HEK293 (cell line): ENCODE measurements at regions of chr22 and their contacts with region 1.

Region 1: DNA sequence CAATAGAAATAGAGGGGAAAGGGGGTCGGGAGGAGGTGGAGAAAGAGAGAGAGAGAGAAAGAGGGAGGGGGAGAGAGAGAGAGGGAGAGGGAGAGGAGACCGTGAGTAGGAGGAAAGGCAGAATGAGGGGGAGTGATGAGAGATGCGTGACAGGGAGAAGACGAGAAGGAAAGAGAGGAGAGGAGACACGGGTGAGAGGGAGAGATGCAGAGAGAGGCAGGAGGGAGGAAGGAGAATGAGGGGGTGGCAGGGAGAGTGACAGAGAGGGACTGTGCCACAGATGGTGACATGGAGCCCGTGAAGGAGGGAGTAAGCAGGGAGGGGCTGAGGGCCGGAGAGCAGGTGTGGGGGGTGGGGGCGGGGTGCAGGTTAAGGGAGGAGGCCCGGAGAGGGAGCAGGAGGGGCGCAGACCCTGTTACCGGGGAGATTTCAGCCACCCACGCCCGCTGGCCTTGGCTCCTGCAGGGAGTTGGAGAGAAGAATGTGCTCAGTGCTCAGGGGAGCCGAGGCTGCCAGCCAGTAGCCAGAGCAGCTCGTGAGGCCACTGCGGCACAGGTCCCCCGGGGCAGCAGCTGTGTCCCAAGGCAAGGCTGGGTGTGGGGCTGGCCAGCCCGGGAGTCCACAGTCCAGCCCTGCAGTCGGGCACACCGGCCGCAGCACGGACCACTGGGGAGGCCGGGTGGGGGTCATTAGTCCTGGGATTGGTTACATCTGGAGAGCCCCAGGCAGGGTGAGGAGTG is at the start of gene SSTR3:
- H3K4me3 ChIP-seq: no peak within 1 kb of the TSS
- H3K27ac ChIP-seq: no peak within 1 kb of the TSS
- H3K4me1 ChIP-seq: no peaks in the 10 kb centered on the region
- CTCF ChIP-seq: no peak

Region 2: DNA sequence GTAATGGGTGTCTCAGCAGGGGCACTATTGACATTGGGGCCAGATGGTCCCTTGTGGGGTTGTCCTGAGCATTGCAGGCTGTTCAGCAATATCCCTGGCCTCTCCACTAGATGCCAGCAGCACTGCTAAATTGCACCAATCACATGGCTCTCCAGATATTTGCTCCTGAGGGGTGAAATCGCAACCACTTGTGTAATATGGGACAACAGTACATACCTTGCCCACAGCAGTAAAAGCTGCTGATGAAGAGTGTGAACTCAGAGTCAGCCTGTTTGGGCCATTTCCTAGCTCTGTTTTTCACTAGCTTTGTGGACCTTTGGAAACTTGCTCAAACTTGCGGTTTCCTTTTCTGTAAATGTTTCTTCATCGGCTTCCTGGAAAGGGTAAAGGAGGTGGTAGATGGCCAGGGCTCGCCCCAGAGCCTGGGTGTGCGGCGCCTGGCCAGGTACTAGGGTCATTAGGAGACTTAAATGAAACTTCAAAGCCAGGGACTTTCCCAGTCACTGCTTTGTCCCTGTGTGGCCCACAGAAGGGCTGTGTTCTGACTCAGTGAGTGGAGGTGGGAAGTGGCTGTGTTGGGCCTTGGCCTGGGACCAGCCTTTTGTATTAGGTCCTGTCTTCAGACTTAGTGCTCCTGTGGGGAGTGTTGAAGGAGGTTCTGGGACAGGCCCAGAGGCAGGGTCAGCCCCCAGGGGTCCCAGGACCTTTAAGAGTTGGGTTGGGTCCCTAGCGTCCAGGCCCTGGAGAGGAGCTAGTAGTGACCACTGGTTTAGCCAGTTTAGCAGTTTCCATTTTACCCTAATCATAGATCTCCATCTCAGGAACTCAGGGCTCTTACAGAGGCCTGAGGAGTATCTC is 338.4 kb before region 1 on chr22:
- CTCF ChIA-PET with region 1: no interaction called
- POLR2A ChIA-PET with region 1: no interaction called
- H3K4me3 ChIP-seq: no peak overlapping the region
- H3K27ac ChIP-seq: no peak overlapping the region
- H3K4me1 ChIP-seq: no peaks in the 10 kb centered on the region
- CTCF ChIP-seq: peak; percentile 22; the same call in 1 of the 2 replicates

Region 3: DNA sequence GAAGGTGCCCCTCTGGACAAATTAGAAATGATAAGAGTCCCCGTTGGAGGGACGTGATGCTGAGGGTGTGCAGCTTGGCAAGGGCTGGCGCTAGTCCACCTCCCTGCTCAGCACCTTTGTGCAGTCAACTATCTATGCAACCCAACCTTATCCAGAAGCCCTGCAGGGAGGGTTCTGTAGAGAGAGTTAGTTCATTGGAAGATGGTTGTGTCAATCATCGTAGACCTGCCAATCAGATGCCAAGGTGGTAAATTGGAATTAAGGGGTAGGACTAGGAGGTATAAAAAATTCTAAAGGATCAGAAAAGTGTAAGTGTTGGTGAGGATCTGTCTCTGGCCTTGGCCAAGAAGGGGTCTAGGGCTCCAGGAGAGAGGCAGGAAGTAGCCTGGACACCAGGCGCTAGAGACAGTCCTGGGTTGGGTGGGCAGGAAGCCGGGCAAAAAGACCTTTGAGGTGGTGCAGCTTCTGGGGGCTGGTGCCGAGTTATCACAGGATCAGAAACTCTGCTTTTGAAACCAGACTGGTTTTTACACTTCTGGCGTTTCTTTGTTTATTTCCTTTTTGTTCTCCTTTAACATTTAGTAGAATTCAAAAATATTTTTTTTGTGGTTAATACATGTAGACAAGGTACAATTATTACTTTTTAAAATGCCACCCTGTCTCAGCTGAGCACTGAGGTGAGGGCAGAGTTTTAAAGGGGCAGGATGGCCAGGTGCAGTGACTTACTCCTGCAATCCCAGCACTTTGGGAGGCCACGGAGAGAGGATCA is 25.9 kb before region 1 on chr22:
- CTCF ChIA-PET with region 1: interaction called, 11 read pairs
- POLR2A ChIA-PET with region 1: no interaction called
- H3K4me3 ChIP-seq: no peak overlapping the region
- H3K27ac ChIP-seq: no peak overlapping the region
- H3K4me1 ChIP-seq: peaks cover 3% of the 10 kb centered on the region; the same call in 1 of the 2 replicates
- CTCF ChIP-seq: no peak